ENCODE measurements at regions of chr11 and their contacts with region 1.

Region 1: DNA sequence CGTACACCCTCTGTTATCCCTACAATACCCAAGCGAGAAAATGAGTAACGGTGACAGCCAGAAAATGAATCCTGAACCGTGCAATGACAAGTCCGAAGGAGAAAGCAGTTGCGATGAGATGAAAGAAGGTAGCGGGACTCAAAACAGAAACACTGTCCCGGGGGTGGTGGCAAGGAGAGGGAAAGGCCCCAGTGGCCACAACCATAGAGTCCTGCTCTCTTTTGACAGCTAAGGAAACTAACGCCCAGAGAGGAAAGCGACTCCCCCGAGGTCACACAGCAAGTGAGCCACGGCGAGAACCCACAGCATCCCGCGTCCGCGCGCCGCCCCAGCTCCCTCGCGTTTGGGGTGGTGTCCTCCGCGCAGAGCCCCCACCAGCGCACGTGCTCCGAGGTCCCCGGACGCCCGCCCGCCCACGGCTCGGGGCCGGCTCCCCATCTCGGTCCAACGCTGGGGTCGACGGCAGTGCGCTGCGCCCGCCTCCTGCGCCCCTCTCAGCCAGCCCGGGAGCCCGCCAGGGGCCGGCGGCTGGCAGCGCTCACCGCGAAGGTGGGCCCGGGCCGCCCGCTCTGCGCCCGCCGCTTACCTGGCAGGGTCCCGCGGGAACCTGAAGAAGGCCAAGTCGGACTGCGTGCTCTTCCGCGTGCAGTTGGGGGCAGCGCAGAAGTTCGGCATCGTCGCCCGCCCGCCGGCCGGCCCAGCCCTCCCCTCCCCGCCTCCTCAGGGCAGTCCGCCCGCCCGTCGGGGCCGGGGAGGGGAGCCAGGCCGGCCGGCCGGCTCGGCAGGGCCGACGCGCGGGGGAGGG is 568 bp downstream of the THAP12 start:
- DNase-seq: no peak
- H3K4me3 ChIP-seq: peak overlapping the region; percentile 85
- H3K27ac ChIP-seq: peak overlapping the region; percentile 48
- H3K27me3 ChIP-seq: no peaks in the 10 kb centered on the region
- CTCF ChIP-seq: 0 out of 2 replicates have a peak, but pooled peaks have one; percentile 3

Region 2: DNA sequence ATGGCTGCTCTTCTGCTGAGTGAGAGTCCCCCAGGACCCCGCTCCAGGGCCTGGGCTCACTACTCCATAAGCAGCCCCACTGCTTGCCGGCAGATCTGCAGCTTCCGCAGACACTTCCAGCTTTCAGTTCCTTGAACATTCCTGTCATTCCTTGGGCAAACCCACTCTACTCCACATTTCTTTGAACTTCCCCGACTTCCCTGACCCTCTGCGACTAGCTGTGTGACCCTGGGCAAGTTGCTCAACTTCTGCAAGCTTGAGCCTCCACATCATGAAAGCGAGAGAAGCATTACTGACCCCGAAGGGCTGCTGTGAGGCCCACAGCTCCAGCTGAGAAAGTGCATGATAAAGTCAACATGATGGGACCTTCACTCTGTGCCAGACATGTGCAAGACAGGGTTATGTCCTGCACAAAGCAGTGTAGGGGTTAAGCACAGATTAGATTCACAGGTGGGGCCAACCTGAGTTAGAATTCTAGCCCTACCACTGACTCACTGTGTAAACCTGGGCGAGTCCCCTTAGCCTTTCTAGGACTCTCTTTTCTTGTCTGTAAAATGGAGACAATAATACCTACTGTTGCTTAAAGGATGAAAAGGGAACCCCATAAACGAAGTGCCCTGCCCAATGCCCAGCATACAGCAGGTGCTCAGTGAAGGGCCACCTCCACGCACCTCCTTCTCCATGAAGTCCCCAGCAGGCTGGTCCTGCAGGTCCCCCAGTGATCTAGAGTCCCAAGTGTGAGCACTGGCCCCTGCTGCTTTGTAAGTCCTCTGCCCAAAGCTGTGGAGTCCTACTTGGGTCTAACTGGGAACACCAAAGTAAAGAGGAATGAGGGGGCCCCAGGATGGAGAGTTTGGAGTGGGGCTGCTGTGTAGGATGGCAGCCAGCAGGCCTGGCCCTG is 51.0 kb before region 1 on chr11:
- CTCF ChIA-PET with region 1: interaction called, 3 read pairs
- POLR2A ChIA-PET with region 1: interaction called, 10 read pairs
- DNase-seq: peak; percentile 23
- H3K4me3 ChIP-seq: no peak overlapping the region
- H3K27ac ChIP-seq: no peak overlapping the region
- H3K27me3 ChIP-seq: peaks cover 14% of the 10 kb centered on the region
- CTCF ChIP-seq: no peak

Region 3: DNA sequence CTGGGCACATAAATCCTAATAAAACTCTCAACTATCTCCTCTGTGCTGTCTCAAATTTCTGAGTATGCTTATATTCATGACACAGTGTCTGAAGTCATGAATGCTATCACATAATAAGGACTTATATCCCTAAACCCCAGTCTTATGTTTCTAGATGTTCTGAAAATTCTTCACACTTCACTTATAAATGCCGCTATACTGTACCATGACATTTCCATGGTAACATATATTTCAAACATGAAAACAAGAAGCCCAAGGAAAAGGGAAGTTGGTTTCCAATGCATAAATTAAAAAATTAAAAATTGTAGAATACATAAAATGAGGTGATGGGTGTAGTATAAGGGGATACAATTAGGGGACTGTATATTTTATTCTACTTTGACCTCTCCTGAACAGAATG is 12.5 kb after region 1 on chr11:
- CTCF ChIA-PET with region 1: no interaction called
- POLR2A ChIA-PET with region 1: no interaction called
- DNase-seq: no peak
- H3K4me3 ChIP-seq: no peak overlapping the region
- H3K27ac ChIP-seq: no peak overlapping the region
- H3K27me3 ChIP-seq: no peaks in the 10 kb centered on the region
- CTCF ChIP-seq: no peak

Measured in AG04450 (cell line).